IMR-90 (cell line): ENCODE measurements at regions of chr21 and their contacts with region 1.

Region 1: DNA sequence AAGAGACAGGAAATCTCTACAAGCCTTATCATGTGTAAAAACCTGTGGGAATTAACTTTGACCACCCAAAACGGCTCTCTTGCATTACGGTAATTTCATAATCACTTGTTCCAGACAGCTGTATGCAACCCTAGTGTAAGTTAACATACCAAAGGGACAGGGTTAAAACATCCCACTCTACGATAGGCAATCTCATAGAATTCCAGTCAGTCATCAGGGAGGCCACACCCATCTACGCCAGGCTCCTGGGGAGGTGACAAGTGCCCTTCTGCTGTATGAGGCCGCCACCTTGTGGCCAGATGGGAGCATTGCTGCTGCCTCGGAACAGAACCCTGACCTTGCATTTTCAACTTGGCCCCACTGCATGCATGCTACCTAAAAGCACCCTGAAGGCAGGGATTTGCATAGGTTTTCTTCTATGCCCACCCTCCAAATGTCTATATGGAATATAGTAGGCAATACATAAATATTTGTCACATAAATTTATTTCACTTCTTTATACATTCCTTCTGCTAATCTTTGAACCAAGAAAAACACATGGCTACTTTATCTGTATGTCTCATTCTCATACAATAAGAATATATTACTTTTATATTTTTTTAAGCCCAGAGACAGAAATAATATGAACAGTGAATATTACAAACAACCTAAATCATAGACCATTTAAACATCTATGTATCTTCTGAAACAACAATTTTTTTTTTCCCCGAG is 12.6 kb downstream of the HSF2BP start:
- DNase-seq: peak; percentile 94
- ATAC-seq: peak; percentile 95
- H3K4me3 ChIP-seq: no peak overlapping the region
- H3K27ac ChIP-seq: no peak overlapping the region
- H3K4me1 ChIP-seq: peaks cover 7% of the 10 kb centered on the region
- H3K27me3 ChIP-seq: no peaks in the 10 kb centered on the region
- CTCF ChIP-seq: peak; percentile 99
- POLR2A ChIP-seq: peak; percentile 69
- RAD21 ChIP-seq: peak; percentile 100

Region 2: DNA sequence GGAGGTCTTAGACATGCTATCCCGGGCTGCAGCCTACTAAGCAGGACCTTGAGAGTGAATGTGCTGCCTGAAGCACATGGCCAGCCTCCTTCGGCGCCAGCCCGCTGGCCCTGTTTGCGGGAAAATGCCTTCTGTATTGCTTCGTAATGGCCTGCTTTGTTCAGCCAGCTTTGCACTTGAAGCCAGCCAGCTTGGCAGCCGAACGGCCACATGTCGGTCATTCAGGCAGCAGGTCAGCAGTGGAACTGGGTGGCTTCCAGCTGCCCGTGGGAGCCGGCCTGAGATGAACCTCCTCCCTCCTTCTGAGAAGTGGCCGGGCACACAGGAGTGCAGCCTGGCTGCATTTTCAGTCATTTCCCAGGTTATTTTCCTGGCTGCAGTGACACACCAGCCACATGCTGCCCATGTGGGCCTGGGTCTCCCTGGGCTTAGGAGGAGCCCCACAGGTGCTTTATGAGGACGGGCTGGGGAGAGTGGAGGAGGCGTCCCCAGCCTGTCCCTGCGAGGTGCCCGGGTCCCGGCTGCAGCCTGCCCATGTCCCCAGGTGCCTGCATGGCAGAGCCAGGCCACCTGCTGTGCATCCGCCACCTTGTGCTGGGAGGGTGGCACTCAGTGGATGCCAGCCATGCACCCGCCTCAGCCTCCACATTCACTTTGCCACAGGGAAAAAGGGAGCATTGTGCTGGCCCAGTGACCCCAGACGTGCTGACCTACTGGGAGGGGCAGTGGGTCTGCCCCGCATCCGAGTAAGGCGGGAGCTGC is 323.3 kb before region 1 on chr21:
- CTCF ChIA-PET with region 1: no interaction called
- POLR2A ChIA-PET with region 1: no interaction called
- dilution Hi-C with region 1: no loop called
- in situ Hi-C with region 1: loop called (anchors 10 kb)
- intact Hi-C with region 1: no loop called
- DNase-seq: no peak
- ATAC-seq: no peak
- H3K4me3 ChIP-seq: no peak overlapping the region
- H3K27ac ChIP-seq: no peak overlapping the region
- H3K4me1 ChIP-seq: peaks cover 13% of the 10 kb centered on the region
- H3K27me3 ChIP-seq: peaks cover 7% of the 10 kb centered on the region; the same call in 1 of the 2 replicates
- CTCF ChIP-seq: no peak
- POLR2A ChIP-seq: no peak
- RAD21 ChIP-seq: no peak

Region 3: GRCh38 chr21:43585924-43586424 is 60.7 kb before region 1 on chr21:
- CTCF ChIA-PET with region 1: interaction called, 3 read pairs
- POLR2A ChIA-PET with region 1: no interaction called
- dilution Hi-C with region 1: no loop called
- in situ Hi-C with region 1: no loop called
- intact Hi-C with region 1: loop called (anchors 2 kb)
- DNase-seq: peak; percentile 98
- ATAC-seq: peak; percentile 93
- H3K4me3 ChIP-seq: no peak overlapping the region
- H3K27ac ChIP-seq: peak overlapping the region; percentile 51; the same call in 1 of the 2 replicates
- H3K4me1 ChIP-seq: peaks cover 6% of the 10 kb centered on the region
- H3K27me3 ChIP-seq: no peaks in the 10 kb centered on the region
- CTCF ChIP-seq: no peak
- POLR2A ChIP-seq: no peak
- RAD21 ChIP-seq: no peak; the same call in 1 of the 2 replicates

Region 4: GRCh38 chr21:43611598-43612369 is 34.9 kb before region 1 on chr21:
- CTCF ChIA-PET with region 1: interaction called, 12 read pairs
- POLR2A ChIA-PET with region 1: no interaction called
- dilution Hi-C with region 1: no loop called
- in situ Hi-C with region 1: loop called (anchors 5 kb)
- intact Hi-C with region 1: loop called (anchors 1 kb)
- DNase-seq: peak; percentile 95
- ATAC-seq: peak; percentile 90
- H3K4me3 ChIP-seq: no peak overlapping the region
- H3K27ac ChIP-seq: peak overlapping the region; percentile 26; the same call in 1 of the 2 replicates
- H3K4me1 ChIP-seq: peaks cover 19% of the 10 kb centered on the region
- H3K27me3 ChIP-seq: no peaks in the 10 kb centered on the region
- CTCF ChIP-seq: peak; percentile 82
- POLR2A ChIP-seq: no peak
- RAD21 ChIP-seq: peak; percentile 73

Region 5: DNA sequence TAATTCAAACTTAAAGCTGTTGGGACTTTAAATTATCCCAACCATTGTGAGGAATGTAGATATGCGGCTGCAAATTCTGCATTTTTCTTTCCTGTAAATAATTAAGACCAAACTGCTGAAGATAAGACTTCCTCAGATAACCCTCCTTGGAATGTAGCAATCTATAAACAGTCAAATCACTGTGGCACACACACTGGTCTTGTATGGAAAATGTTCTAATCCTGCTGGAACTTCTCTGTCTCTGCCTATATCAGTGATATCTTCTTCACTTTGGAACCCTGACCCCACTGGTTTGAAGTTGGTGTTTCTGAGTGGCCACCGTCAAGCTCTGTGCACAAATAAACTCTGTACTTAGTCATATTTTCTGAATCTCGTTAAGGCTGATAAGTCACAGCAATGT is 20.3 kb before region 1 on chr21:
- CTCF ChIA-PET with region 1: interaction called, 3 read pairs
- POLR2A ChIA-PET with region 1: no interaction called
- dilution Hi-C with region 1: no loop called
- in situ Hi-C with region 1: no loop called
- intact Hi-C with region 1: loop called (anchors 2 kb)
- DNase-seq: peak; percentile 64
- ATAC-seq: peak; percentile 96
- H3K4me3 ChIP-seq: no peak overlapping the region
- H3K27ac ChIP-seq: peak overlapping the region; percentile 79; the same call in 1 of the 2 replicates
- H3K4me1 ChIP-seq: peaks cover 4% of the 10 kb centered on the region
- H3K27me3 ChIP-seq: no peaks in the 10 kb centered on the region; the same call in 1 of the 2 replicates
- CTCF ChIP-seq: no peak
- POLR2A ChIP-seq: no peak
- RAD21 ChIP-seq: no peak